GM10248 (cell line): ENCODE measurements at regions of chr11 and their contacts with region 1.

Region 1: GRCh38 chr11:62394825-62395538 is 23.9 kb upstream of the SCGB1A1 start:
- DNase-seq: peak; percentile 81
- CTCF ChIP-seq: peak; percentile 64

Region 2: GRCh38 chr11:62370743-62371440 is 24.1 kb before region 1 on chr11:
- CTCF ChIA-PET with region 1: no interaction called
- POLR2A ChIA-PET with region 1: no interaction called
- DNase-seq: no peak
- CTCF ChIP-seq: no peak

Region 3: DNA sequence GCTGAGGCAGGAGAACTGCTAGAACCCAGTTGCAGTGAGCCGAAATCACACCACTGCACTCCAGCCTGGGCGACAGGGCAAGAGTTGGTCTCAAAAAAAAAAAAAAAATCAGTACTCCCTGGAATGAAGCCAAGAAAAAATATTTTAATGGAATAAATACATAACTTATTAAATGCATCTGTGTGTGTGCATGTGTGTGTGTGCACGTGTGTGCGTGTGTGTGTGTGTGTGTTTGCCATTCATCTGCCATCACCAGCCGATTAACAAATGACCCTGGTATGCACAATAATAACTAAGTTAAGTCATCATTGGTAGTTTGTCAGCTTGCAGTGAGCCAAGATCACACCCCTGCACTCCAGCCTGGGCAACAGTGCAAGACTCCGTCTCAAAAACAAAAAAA is 11.2 kb before region 1 on chr11:
- CTCF ChIA-PET with region 1: interaction called, 11 read pairs
- POLR2A ChIA-PET with region 1: no interaction called
- DNase-seq: no peak
- CTCF ChIP-seq: no peak

Region 4: DNA sequence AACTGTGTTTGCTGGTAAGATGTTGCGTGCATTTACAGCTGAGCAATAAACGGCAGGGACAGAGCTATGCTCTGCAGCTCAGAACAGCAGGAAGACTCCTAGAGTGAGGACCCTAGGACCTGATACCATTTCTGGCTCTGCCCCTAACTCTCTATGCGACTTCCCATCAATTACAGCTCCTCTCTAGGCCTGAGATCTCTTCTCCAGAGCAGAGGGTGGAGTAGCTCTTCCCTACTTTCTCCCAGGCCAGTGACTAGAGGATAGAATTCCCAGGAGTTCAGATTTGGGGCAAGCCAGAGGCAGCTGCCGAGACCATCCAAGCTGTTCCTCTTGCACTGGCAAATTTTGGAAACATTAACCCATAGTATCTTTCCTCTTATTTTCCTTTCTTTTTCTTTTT is 11.1 kb after region 1 on chr11:
- CTCF ChIA-PET with region 1: interaction called, 16 read pairs
- POLR2A ChIA-PET with region 1: no interaction called
- DNase-seq: no peak
- CTCF ChIP-seq: no peak

Region 5: DNA sequence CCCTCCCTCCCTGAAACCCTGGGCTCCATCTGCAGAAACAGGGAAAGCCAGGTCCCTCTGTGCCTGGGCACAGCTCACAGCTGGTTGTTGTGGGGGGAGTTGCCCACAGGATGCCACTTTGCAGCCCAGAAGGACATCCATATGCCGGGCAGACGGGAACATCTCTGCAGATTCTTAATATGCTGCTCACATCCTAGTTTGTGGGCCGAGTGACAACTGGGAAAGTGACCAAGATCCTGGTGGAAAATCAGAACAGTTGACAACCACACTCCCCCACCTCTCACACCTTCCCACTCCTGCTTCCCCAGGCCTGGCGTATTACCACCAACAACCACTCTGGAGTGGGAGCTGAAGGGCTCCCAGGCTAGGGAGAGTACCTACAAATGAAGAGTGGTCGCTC is 16.5 kb after region 1 on chr11:
- CTCF ChIA-PET with region 1: interaction called, 12 read pairs
- POLR2A ChIA-PET with region 1: no interaction called
- DNase-seq: no peak
- CTCF ChIP-seq: no peak